HEK293 (cell line): ENCODE measurements at regions of chr11 and their contacts with region 1.

Region 1: DNA sequence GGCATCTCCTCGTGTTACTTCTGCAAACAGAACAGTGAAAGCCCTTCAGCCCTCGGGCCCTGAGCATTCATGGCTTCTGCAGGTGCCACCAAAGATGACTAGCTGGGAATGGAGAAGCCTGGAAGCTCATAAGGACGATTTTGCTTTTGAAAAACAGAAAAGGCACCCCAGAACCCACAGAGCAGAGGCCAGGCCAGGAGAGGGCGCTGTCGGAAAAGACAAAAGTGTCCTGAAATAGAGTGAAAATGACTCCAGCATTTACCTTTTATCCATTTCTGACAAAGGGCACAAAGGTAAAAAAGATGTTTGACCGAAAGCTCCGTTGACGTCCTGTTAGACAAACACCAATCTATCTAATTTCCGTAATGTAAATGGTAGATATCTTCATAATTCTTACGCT is 37.6 kb downstream of the ZNF195 start:
- H3K4me3 ChIP-seq: no peak overlapping the region
- H3K27ac ChIP-seq: no peak overlapping the region
- H3K4me1 ChIP-seq: no peaks in the 10 kb centered on the region
- CTCF ChIP-seq: no peak

Region 2: GRCh38 chr11:3356858-3357257 is 15.6 kb after region 1 on chr11:
- CTCF ChIA-PET with region 1: interaction called, 18 read pairs
- POLR2A ChIA-PET with region 1: no interaction called
- H3K4me3 ChIP-seq: no peak overlapping the region
- H3K27ac ChIP-seq: no peak overlapping the region
- H3K4me1 ChIP-seq: no peaks in the 10 kb centered on the region
- CTCF ChIP-seq: no peak

Region 3: GRCh38 chr11:3370311-3370870 is 29.1 kb after region 1 on chr11:
- CTCF ChIA-PET with region 1: interaction called, 21 read pairs
- POLR2A ChIA-PET with region 1: no interaction called
- H3K4me3 ChIP-seq: no peak overlapping the region
- H3K27ac ChIP-seq: no peak overlapping the region
- H3K4me1 ChIP-seq: no peaks in the 10 kb centered on the region
- CTCF ChIP-seq: no peak

Region 4: GRCh38 chr11:3378426-3379423 is 37.4 kb after region 1 on chr11 and contains the start of gene ZNF195:
- CTCF ChIA-PET with region 1: interaction called, 22 read pairs
- POLR2A ChIA-PET with region 1: no interaction called
- H3K4me3 ChIP-seq: peak within 1 kb of the TSS; percentile 93
- H3K27ac ChIP-seq: peak within 1 kb of the TSS; percentile 56; the same call in 1 of the 2 replicates
- H3K4me1 ChIP-seq: no peaks in the 10 kb centered on the region
- CTCF ChIP-seq: no peak

Region 5: DNA sequence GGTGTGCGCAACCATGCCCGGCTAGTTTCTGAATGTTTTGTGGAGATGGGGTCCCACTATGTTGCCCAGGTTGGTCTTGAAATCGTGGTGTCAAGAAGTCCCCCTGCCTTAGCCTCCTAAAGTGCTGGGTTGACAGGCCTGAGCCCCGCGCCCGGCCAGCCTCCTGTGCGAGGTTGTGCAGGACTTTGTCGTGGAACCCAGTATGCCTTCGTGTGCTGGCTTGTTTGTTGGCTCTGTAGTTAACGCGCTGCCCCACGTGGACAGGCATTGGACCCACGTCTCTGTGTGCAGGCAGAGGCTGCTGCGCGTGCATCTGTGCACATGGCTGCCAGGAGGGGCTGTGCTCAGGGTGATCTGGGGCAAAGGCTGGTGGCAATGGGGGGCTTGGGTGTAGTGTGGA is 71.5 kb after region 1 on chr11:
- CTCF ChIA-PET with region 1: interaction called, 62 read pairs
- POLR2A ChIA-PET with region 1: no interaction called
- H3K4me3 ChIP-seq: no peak overlapping the region
- H3K27ac ChIP-seq: no peak overlapping the region
- H3K4me1 ChIP-seq: no peaks in the 10 kb centered on the region
- CTCF ChIP-seq: no peak